A673 (cell line): ENCODE measurements at regions of chr2 and their contacts with region 1.

Region 1: GRCh38 chr2:162123806-162124758 is 28.0 kb downstream of the GCG start:
- DNase-seq: peak; percentile 73
- H3K4me3 ChIP-seq: no peak overlapping the region
- H3K27ac ChIP-seq: no peak overlapping the region
- H3K4me1 ChIP-seq: no peaks in the 10 kb centered on the region
- H3K27me3 ChIP-seq: no peaks in the 10 kb centered on the region
- CTCF ChIP-seq: peak; percentile 79

Region 2: GRCh38 chr2:161223139-161223732 is 900.8 kb before region 1 on chr2:
- CTCF ChIA-PET with region 1: no interaction called
- POLR2A ChIA-PET with region 1: no interaction called
- intact Hi-C with region 1: loop called (anchors 10 kb)
- DNase-seq: peak; percentile 63
- H3K4me3 ChIP-seq: no peak overlapping the region
- H3K27ac ChIP-seq: no peak overlapping the region
- H3K4me1 ChIP-seq: peaks cover 6% of the 10 kb centered on the region
- H3K27me3 ChIP-seq: no peaks in the 10 kb centered on the region
- CTCF ChIP-seq: peak; percentile 78

Region 3: DNA sequence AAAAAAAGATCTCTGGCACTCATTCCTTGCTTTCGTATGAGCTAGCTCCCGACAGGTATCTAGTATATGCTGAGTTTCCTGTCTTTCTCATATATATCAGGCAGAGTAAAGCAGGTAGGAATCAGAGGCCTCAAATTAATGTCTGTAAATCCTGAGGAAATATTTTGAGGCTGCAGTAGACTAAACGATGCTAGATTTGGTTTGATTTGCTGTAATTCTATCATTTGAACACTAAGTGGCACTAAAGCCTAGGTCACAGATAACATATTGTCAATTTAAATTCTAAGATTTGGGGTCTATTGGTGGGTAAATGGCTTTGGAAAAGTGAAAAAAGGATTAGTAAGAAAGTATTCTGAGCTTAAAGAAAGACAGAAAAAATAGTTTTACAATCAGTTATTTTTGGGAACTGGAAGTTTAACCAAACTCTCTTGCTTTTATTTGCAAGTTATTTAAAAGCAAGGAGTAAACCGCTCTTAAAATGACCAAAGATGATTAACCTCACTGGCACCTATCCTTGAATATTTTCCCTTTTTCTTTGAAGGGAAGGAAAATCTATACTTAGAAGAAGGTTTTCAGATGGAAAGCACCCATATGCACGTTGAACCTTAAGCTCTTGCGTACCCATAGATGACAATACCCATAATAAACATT is 537.4 kb before region 1 on chr2:
- CTCF ChIA-PET with region 1: no interaction called
- POLR2A ChIA-PET with region 1: no interaction called
- intact Hi-C with region 1: loop called (anchors 1 kb)
- DNase-seq: peak; percentile 56
- H3K4me3 ChIP-seq: no peak overlapping the region
- H3K27ac ChIP-seq: no peak overlapping the region
- H3K4me1 ChIP-seq: no peaks in the 10 kb centered on the region
- H3K27me3 ChIP-seq: no peaks in the 10 kb centered on the region
- CTCF ChIP-seq: peak; percentile 78

Region 4: DNA sequence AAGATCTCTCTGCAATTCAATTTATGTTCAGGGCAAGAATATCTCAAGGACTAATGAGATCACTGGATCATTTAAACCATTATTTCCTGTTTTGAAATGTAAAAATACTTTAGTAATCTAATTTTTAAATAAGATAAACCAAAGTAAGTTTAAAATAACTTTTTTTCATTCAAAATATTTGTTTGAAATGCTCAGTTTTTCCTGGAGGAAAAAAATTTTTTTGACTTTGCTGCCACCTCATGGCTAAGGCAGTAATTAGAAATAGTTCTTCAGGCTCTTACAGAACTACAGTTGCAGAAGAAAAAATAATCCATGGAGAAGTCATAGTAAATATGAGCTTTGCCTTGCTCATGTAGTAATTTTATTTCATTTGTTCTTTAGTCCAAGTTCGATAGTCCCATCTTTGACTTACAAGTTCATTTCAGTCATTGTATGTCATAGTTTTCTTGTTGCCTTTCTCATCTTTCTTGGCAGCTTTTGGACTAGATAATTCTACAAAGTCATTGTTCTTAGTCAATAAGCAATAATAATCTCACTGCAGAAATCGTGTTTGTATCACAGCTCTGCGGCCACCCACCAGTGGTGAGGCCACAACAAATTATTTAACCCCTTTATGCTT is 177.5 kb before region 1 on chr2:
- CTCF ChIA-PET with region 1: no interaction called
- POLR2A ChIA-PET with region 1: no interaction called
- intact Hi-C with region 1: loop called (anchors 5 kb)
- DNase-seq: peak; percentile 56
- H3K4me3 ChIP-seq: no peak overlapping the region
- H3K27ac ChIP-seq: no peak overlapping the region
- H3K4me1 ChIP-seq: no peaks in the 10 kb centered on the region
- H3K27me3 ChIP-seq: no peaks in the 10 kb centered on the region
- CTCF ChIP-seq: peak; percentile 72

Region 5: GRCh38 chr2:162007447-162008040 is 116.5 kb before region 1 on chr2:
- CTCF ChIA-PET with region 1: no interaction called
- POLR2A ChIA-PET with region 1: no interaction called
- intact Hi-C with region 1: loop called (anchors 5 kb)
- DNase-seq: peak; percentile 16
- H3K4me3 ChIP-seq: no peak overlapping the region
- H3K27ac ChIP-seq: no peak overlapping the region
- H3K4me1 ChIP-seq: no peaks in the 10 kb centered on the region
- H3K27me3 ChIP-seq: no peaks in the 10 kb centered on the region
- CTCF ChIP-seq: peak; percentile 73